ENCODE measurements at regions of chr7 and their contacts with region 1.

Region 1: DNA sequence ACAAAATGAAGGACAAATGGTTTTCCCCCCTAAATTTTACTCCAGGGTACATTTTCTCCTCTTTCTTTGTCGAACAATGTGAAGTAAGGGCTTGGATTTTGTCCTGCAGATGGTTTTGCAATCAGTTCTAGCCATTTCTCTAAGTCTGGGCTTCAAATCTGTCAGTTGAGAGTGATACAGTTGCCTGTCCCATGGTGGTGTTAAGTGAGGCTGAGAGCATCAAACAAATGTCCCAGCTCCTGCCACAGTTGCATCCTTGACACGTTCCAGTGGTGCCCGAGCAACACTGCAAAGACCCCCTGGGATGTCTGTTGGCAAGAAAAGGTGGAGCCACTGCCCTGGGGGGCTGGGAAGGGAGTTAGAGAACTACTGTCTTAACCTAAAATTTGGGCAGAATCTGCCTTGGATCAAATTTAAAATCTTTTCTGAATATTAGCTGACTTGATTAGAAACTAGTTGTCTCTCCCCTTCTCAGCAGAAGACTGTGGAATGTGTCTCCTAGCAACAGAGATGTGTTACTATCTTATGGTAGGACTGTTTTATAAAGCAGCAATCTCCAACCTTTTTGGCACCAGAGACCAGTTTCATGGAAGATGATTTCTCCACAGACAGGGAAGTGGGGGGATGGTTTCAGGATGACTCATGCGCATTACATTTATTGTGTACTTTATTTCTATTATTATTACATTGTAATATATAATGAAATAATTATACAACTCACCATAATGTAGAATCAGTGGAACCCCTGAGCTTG is 102.0 kb upstream of the STEAP1B start:
- DNase-seq: peak; percentile 34
- H3K4me3 ChIP-seq: no peak overlapping the region
- H3K27ac ChIP-seq: peak overlapping the region; percentile 71
- H3K4me1 ChIP-seq: peaks cover 39% of the 10 kb centered on the region
- H3K27me3 ChIP-seq: no peaks in the 10 kb centered on the region
- CTCF ChIP-seq: no peak
- POLR2A ChIP-seq: no peak

Region 2: DNA sequence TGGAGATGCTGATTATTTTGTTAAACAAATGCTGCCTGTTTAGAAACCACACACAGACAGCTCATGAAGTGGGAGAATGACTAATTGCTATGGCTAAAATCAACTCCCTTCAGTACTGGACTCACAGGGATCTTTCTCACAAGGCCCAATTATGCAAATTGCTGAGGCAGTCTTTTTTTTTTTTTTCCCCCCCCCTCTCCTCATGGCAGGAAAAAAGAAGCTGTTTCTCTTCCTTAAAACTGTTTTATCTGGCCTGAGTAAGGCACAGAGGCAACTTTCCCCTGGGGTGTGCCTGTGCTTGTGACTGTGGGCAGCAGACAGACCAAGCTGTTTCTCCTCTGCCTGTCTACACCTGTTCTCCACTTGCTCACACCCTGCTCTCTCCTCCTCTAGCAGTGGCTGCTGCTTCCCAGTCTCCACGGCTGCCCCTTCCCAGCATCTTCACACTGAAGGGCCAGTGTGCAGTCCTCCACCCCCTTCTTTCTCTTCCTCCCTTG is 36.6 kb before region 1 on chr7:
- CTCF ChIA-PET with region 1: interaction called, 3 read pairs
- POLR2A ChIA-PET with region 1: no interaction called
- dilution Hi-C with region 1: no loop called
- intact Hi-C with region 1: loop called (anchors 2 kb)
- DNase-seq: peak; percentile 69
- H3K4me3 ChIP-seq: peak overlapping the region in 1 of 3 experiments; percentile 70
- H3K27ac ChIP-seq: peak overlapping the region; percentile 99
- H3K4me1 ChIP-seq: peaks cover 72% of the 10 kb centered on the region
- H3K27me3 ChIP-seq: no peaks in the 10 kb centered on the region
- CTCF ChIP-seq: no peak
- POLR2A ChIP-seq: peak; percentile 41

Region 3: GRCh38 chr7:22586786-22587140 is 15.2 kb before region 1 on chr7:
- CTCF ChIA-PET with region 1: interaction called, 4 read pairs
- POLR2A ChIA-PET with region 1: no interaction called
- dilution Hi-C with region 1: no loop called
- intact Hi-C with region 1: loop called (anchors 1 kb)
- DNase-seq: no peak
- H3K4me3 ChIP-seq: no peak overlapping the region
- H3K27ac ChIP-seq: peak overlapping the region; percentile 95
- H3K4me1 ChIP-seq: peaks cover 75% of the 10 kb centered on the region
- H3K27me3 ChIP-seq: no peaks in the 10 kb centered on the region
- CTCF ChIP-seq: peak; percentile 34 to 56
- POLR2A ChIP-seq: no peak

Measured in endothelial cell of umbilical vein (primary cell).